Heart left ventricle (tissue), 16 donors: ENCODE measurements at regions of chr19 and their contacts with region 1.

Region 1: GRCh38 chr19:44071824-44072542 is at the start of gene ZNF284:
- DNase-seq: peak; percentile 87 to 91 (median 89)
- ATAC-seq: peak; percentile 98 to 100 (median 100)
- H3K4me3 ChIP-seq: peak within 1 kb of the TSS; percentile 38 to 80 (median 64)
- H3K27ac ChIP-seq: peak within 1 kb of the TSS in 9 of 12 donors; percentile 19 to 75 (median 59)
- H3K4me1 ChIP-seq: peaks cover 0 to 15% (median 8%) of the 10 kb centered on the region in 12 donors
- H3K27me3 ChIP-seq: no peaks in the 10 kb centered on the region
- CTCF ChIP-seq: no peak
- POLR2A ChIP-seq: peak in 1 of 2 donors; percentile 20
- total RNA-seq, gene ZNF284: 1.2 to 2.7 (median 1.8) TPM

Region 2: DNA sequence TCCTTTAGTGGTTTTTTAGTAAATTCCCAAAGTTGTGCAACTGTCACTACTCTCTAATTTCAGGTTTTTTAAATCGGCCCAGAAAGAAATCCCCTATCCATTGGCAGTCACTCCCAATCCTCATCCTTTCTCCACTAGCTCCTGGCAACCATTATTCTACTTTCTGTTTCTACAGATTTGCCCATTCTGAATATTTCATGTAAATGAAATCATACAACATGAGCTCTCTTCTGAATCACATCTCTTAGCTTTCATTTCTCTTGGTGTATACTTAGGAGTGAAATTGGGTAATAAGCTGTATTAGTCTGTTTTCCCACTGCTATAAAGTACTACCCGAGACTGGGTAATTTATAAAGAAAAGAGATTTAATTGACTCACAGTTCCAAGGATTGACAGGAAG is 29.8 kb before region 1 on chr19:
- intact Hi-C with region 1: no loop called
- DNase-seq: no peak
- ATAC-seq: no peak
- H3K4me3 ChIP-seq: no peak overlapping the region
- H3K27ac ChIP-seq: no peak overlapping the region
- H3K4me1 ChIP-seq: no peaks in the 10 kb centered on the region
- H3K27me3 ChIP-seq: peaks cover 0 to 28% (median 0%) of the 10 kb centered on the region in 9 donors
- CTCF ChIP-seq: no peak
- POLR2A ChIP-seq: no peak

Region 3: DNA sequence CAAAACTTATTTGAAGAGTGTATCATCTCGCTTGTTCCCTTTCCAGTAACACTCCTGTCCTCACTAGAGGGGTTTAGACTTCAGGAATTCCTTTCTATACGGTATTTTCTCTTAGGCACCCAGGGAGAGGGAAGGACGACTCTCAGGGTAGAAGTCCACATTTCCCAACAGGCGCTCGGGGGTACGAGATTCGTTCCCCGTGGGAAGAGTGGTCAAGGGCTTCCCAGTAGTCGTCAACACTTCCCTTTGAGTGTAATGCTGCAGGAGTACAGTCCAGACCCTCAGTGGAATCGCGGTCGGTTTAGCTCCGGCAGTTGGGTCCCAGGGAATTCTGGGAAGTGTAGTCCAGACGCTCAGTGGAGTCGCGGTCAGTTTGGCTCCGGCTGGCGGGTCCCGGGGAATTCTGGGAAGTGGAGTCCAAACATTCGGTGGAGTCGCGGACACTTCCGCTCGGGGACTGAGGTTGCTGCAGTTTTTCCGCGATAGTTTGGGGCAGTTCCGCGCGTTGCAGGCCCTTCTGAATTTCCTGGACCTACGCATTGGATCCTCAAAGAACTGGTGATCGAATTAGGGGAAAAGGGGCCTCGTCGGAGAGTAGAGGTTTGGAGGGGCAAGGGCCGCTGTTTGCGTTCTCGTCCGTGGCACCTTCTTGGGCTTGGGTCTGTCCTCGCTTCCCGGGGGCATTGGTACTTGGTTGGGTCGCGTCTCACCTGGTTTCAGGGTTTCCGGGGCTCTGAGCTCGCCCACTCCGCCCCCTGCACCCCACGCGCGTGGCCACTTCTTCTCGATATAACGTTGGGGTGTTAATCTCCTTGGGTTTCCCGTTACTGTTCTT is 22.2 kb after region 1 on chr19 and contains the start of gene ZNF224:
- intact Hi-C with region 1: loop called in 1 of 10 experiments (anchors 1 kb)
- DNase-seq: peak; percentile 93 to 95 (median 94)
- ATAC-seq: peak; percentile 95 to 99 (median 99)
- H3K4me3 ChIP-seq: peak within 1 kb of the TSS; percentile 67 to 89 (median 77)
- H3K27ac ChIP-seq: peak within 1 kb of the TSS in 11 of 12 donors; percentile 51 to 86 (median 76)
- H3K4me1 ChIP-seq: peaks cover 0 to 24% (median 11%) of the 10 kb centered on the region in 12 donors
- H3K27me3 ChIP-seq: no peaks in the 10 kb centered on the region
- CTCF ChIP-seq: no peak
- POLR2A ChIP-seq: peak in 1 of 2 donors; percentile 62
- total RNA-seq, gene ZNF224: 9.9 to 17.7 (median 13.0) TPM